Breast epithelium (tissue), 4 donors: ENCODE measurements at regions of chr5 and their contacts with region 1.

Region 1: GRCh38 chr5:159735749-159736660 is 180.3 kb upstream of the ADRA1B start:
- DNase-seq: no peak
- H3K4me3 ChIP-seq: no peak overlapping the region
- H3K27ac ChIP-seq: no peak overlapping the region
- H3K4me1 ChIP-seq: no peaks in the 10 kb centered on the region
- H3K27me3 ChIP-seq: peaks cover 0 to 8% of the 10 kb centered on the region in 2 donors
- CTCF ChIP-seq: no peak
- POLR2A ChIP-seq: no peak

Region 2: GRCh38 chr5:159310511-159310910 is 425.5 kb before region 1 on chr5:
- intact Hi-C with region 1: no loop called
- DNase-seq: no peak
- H3K4me3 ChIP-seq: peak overlapping the region in 2 of 3 donors; percentile 24 to 54
- H3K27ac ChIP-seq: no peak overlapping the region
- H3K4me1 ChIP-seq: no peaks in the 10 kb centered on the region
- H3K27me3 ChIP-seq: peaks cover 0 to 3% of the 10 kb centered on the region in 2 donors
- CTCF ChIP-seq: no peak
- POLR2A ChIP-seq: no peak

Region 3: DNA sequence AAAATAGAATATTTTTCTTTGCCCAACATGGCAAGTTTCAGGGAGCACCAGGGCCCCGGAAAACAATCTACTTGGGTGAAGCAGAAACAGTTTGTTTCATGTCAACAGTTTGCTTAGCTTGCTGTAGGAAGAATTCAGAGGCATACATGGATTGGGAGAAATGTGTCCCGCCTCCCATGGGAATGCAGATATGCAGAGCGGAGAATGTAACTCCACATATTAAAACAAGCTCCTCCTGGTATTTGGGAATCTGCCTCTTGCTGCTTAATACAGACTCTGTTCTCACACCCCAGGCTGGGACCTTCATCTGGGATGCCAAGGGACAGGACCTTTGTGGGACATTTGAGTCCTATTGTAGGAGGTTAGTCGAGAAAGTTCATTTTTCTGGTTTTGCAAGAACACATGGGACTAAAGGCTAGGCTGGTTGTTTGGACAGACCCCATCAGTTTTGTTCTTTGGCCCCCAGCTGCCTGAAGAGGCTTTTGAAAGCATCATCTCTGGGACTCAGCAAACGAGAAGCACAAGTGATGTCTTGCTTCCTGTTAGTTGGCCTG is 40.2 kb before region 1 on chr5:
- intact Hi-C with region 1: no loop called
- DNase-seq: no peak
- H3K4me3 ChIP-seq: no peak overlapping the region
- H3K27ac ChIP-seq: peak overlapping the region in 1 of 2 donors; percentile 9
- H3K4me1 ChIP-seq: no peaks in the 10 kb centered on the region
- H3K27me3 ChIP-seq: no peaks in the 10 kb centered on the region
- CTCF ChIP-seq: no peak
- POLR2A ChIP-seq: no peak

Region 4: GRCh38 chr5:159800131-159800840 is 64.3 kb after region 1 on chr5:
- intact Hi-C with region 1: loop called (anchors 2 kb)
- DNase-seq: no peak
- H3K4me3 ChIP-seq: no peak overlapping the region
- H3K27ac ChIP-seq: no peak overlapping the region
- H3K4me1 ChIP-seq: no peaks in the 10 kb centered on the region
- H3K27me3 ChIP-seq: no peaks in the 10 kb centered on the region
- CTCF ChIP-seq: no peak
- POLR2A ChIP-seq: no peak